Naive thymus-derived CD4-positive, alpha-beta T cell (primary cell): ENCODE measurements at regions of chr9 and their contacts with region 1.

Region 1: GRCh38 chr9:110623462-110624025 is 44.0 kb upstream of the SVEP1 start:
- DNase-seq: peak in 3 of 9 donors; percentile 3 to 16 (median 5)
- ATAC-seq: no peak
- H3K4me3 ChIP-seq: no peak overlapping the region
- H3K4me3 Mint-ChIP-seq: peak overlapping the region in 1 of 10 donors; percentile 42
- H3K27ac ChIP-seq: no peak overlapping the region
- H3K27ac Mint-ChIP-seq: no peak overlapping the region
- H3K4me1 ChIP-seq: no peaks in the 10 kb centered on the region
- H3K4me1 Mint-ChIP-seq: no peaks in the 10 kb centered on the region
- H3K27me3 ChIP-seq: no peaks in the 10 kb centered on the region
- H3K27me3 Mint-ChIP-seq: no peaks in the 10 kb centered on the region

Region 2: DNA sequence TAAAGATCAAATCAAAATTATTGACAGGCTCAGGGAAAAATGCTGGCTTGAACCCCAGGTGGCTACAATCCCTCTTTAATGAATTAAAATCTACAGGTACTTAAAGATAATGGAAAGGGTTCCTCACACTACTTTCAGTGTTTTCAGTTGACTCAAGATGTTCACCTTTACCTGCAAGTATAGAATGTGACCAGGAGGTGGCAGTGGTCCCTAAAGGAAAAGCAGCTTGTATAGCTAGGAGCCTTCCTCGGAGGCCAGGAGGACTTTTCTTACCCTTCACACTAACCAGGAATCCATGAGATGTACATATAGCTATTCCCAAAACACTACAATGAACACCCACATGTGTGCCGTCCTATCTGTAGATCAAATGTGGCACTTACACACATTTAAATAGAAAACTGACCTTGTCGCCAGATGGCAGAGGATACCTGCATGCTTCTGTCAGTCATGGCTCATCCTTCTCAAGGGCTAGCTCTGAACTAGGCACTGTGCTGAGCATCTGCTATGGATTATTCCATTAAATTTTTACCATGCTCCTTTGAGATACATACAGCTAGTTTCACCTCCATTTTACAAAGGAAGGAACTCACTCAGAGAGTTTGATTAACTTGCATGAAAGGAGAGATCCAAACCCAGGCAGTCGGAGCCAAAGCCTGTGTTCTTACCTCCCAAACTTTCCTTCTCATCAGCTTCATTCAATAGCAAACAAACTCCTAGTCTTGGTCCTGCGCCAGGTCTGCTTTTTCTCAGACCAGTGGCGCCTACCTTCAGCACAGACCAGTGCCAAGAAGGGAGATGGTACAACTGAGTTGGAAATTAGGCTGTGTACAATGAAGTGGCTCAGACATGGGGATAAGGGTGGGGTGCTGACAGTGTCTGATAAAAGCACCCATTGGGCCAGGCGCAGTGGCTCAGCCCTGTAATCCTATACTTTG is 440.1 kb before region 1 on chr9:
- CTCF ChIA-PET with region 1: interaction called, 3 read pairs
- POLR2A ChIA-PET with region 1: no interaction called
- intact Hi-C with region 1: loop called in 1 of 2 experiments (anchors 1 kb)
- DNase-seq: peak in 8 of 9 donors; percentile 10 to 58 (median 40)
- ATAC-seq: peak; percentile 71
- H3K4me3 ChIP-seq: no peak overlapping the region
- H3K4me3 Mint-ChIP-seq: no peak overlapping the region
- H3K27ac ChIP-seq: no peak overlapping the region
- H3K27ac Mint-ChIP-seq: no peak overlapping the region
- H3K4me1 ChIP-seq: no peaks in the 10 kb centered on the region
- H3K4me1 Mint-ChIP-seq: peaks cover 0 to 16% (median 0%) of the 10 kb centered on the region in 7 donors
- H3K27me3 ChIP-seq: no peaks in the 10 kb centered on the region
- H3K27me3 Mint-ChIP-seq: peaks cover 0 to 2% (median 0%) of the 10 kb centered on the region in 5 donors

Region 3: GRCh38 chr9:110382741-110383140 is 240.8 kb before region 1 on chr9:
- CTCF ChIA-PET with region 1: no interaction called
- POLR2A ChIA-PET with region 1: no interaction called
- intact Hi-C with region 1: no loop called
- DNase-seq: no peak
- ATAC-seq: no peak
- H3K4me3 ChIP-seq: no peak overlapping the region
- H3K4me3 Mint-ChIP-seq: no peak overlapping the region
- H3K27ac ChIP-seq: no peak overlapping the region
- H3K27ac Mint-ChIP-seq: no peak overlapping the region
- H3K4me1 ChIP-seq: no peaks in the 10 kb centered on the region
- H3K4me1 Mint-ChIP-seq: no peaks in the 10 kb centered on the region
- H3K27me3 ChIP-seq: no peaks in the 10 kb centered on the region
- H3K27me3 Mint-ChIP-seq: peaks cover 4 to 22% (median 16%) of the 10 kb centered on the region in 5 donors

Region 4: DNA sequence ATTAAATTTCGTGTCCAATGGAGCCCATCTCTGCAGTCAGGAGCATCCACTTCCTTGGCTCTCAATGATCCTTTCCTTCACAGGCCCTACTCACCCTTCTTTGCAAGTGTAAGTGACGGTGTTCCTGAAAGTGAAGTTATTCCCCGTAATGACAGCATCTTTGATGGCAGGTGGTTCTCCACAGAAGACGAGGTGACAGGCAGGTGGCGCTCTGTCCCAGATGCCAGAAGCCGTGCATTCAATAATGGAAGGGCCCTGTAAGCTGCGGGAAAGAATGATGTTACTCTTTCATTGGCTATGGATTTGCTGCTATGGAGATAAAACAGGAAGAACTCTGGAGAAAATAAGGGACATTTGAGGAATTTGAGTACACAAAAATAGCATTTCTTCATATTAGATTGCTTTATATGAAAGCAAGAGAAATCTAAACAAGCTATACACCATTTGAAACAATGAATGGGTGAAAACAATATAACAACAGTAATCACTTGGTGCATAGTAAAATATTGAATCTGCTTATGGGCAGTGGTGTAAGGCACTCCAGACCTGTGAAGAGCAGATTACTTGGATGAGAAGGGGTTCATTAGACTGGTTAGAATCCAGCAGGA is 195.9 kb before region 1 on chr9:
- CTCF ChIA-PET with region 1: no interaction called
- POLR2A ChIA-PET with region 1: no interaction called
- intact Hi-C with region 1: loop called in 1 of 2 experiments (anchors 5 kb)
- DNase-seq: no peak
- ATAC-seq: no peak
- H3K4me3 ChIP-seq: no peak overlapping the region
- H3K4me3 Mint-ChIP-seq: no peak overlapping the region
- H3K27ac ChIP-seq: no peak overlapping the region
- H3K27ac Mint-ChIP-seq: no peak overlapping the region
- H3K4me1 ChIP-seq: no peaks in the 10 kb centered on the region
- H3K4me1 Mint-ChIP-seq: no peaks in the 10 kb centered on the region
- H3K27me3 ChIP-seq: no peaks in the 10 kb centered on the region
- H3K27me3 Mint-ChIP-seq: peaks cover 0 to 6% (median 0%) of the 10 kb centered on the region in 5 donors

Region 5: DNA sequence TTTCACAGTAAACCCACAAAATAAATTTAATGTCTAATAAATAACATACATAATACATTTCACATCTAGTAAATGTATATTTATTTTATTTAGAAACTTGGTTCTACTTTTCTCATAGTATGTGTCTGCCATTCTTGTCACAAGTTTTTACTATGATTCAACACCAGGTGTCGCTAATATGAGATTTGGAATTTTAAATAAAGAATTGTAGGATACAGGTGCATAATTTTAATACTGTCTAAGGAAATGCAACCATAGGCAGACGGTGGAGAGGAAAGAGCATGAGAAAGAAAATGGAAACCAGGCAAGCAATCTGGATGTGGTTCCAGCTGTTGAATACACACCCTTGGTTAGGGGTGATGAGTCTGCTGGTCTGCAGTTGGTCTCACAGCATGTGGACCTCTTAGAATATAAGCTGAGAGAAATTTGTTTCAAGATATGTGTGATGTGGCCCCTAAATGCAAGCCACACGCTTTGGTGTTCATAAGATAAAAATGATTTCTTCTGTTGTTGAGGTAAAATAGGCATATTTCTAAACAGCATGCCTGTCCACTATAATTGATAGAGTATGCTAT is 171.2 kb before region 1 on chr9:
- CTCF ChIA-PET with region 1: no interaction called
- POLR2A ChIA-PET with region 1: no interaction called
- intact Hi-C with region 1: loop called in 1 of 2 experiments (anchors 10 kb)
- DNase-seq: no peak
- ATAC-seq: no peak
- H3K4me3 ChIP-seq: no peak overlapping the region
- H3K4me3 Mint-ChIP-seq: no peak overlapping the region
- H3K27ac ChIP-seq: no peak overlapping the region
- H3K27ac Mint-ChIP-seq: peak overlapping the region in 1 of 9 donors; percentile 76
- H3K4me1 ChIP-seq: no peaks in the 10 kb centered on the region
- H3K4me1 Mint-ChIP-seq: no peaks in the 10 kb centered on the region
- H3K27me3 ChIP-seq: no peaks in the 10 kb centered on the region
- H3K27me3 Mint-ChIP-seq: peaks cover 0 to 7% (median 0%) of the 10 kb centered on the region in 5 donors